BJ (cell line): ENCODE measurements at regions of chr1 and their contacts with region 1.

Region 1: DNA sequence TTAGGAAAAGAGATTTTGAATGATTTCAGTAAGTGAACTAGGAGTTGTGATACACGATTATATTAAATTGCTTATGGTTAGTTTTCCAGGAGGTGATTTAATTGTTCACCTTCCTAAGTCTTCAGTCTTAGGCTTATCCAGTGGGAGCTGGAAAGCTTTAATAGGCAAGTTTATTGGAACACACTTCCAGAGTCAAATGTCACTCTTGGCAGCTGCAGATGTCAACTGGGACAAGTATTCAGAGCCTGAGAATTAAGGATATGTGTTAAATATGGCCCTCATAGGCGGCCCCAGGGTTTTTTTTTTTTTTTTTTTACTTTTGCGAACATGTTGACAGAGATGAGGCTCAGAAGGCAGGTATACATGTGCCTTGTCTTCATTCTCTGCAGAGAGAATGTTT is 29.2 kb downstream of the UCK2 start:
- DNase-seq: no peak
- H3K4me3 ChIP-seq: no peak overlapping the region
- H3K27me3 ChIP-seq: no peaks in the 10 kb centered on the region
- CTCF ChIP-seq: no peak

Region 2: GRCh38 chr1:165842671-165843129 is 13.9 kb before region 1 on chr1:
- CTCF ChIA-PET with region 1: no interaction called
- POLR2A ChIA-PET with region 1: no interaction called
- DNase-seq: no peak
- H3K4me3 ChIP-seq: no peak overlapping the region
- H3K27me3 ChIP-seq: no peaks in the 10 kb centered on the region
- CTCF ChIP-seq: no peak

Region 3: DNA sequence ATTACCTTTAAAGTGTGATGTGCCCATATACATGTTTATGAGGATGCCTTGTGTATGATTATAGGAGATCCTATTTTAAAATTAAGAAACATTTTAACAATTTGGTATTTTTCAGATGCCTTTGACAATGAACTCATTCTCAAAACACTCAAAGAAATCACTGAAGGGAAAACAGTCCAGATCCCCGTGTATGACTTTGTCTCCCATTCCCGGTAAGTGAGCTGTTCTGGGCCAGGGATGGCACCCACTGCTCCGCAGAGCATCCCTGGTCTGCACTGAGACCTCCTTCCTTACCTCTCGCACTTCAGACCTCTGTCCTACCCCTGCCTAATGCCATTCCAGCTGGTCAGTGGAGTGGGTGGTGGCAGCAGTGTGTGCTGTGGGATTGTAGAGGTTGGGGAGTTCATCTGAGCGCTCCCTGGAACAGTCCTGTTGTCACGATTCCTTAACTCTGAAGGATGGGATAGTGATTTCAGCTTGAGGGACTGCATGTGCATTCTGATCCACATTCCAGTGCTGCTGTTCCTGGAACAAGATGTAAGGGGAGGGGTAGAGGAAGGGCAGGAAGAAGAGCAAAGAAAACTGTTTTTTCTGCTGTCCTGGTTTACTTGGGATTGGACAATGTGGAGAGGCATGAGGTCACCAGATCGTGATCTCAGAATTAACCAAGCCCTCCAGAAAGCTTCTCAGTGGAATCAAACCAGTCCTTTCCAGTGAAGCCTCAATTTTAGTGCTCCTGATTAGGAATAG is 34.7 kb after region 1 on chr1:
- CTCF ChIA-PET with region 1: no interaction called
- POLR2A ChIA-PET with region 1: interaction called, 10 read pairs
- DNase-seq: no peak
- H3K4me3 ChIP-seq: no peak overlapping the region
- H3K27me3 ChIP-seq: no peaks in the 10 kb centered on the region
- CTCF ChIP-seq: no peak